Activated CD4-positive, alpha-beta T cell treated with anti-CD3 and anti-CD28 coated beads for 36 hours (primary cell): ENCODE measurements at regions of chr19 and their contacts with region 1.

Region 1: GRCh38 chr19:1490311-1491113 is at the start of gene PCSK4:
- DNase-seq: peak; percentile 99
- ATAC-seq: peak; percentile 92
- H3K4me3 Mint-ChIP-seq: peak within 1 kb of the TSS; percentile 72
- H3K27ac Mint-ChIP-seq: peak within 1 kb of the TSS; percentile 66
- H3K4me1 Mint-ChIP-seq: peaks cover 9% of the 10 kb centered on the region
- H3K27me3 Mint-ChIP-seq: peaks cover 3% of the 10 kb centered on the region
- total RNA-seq, gene PCSK4: 1.8 to 3.9 TPM

Region 2: DNA sequence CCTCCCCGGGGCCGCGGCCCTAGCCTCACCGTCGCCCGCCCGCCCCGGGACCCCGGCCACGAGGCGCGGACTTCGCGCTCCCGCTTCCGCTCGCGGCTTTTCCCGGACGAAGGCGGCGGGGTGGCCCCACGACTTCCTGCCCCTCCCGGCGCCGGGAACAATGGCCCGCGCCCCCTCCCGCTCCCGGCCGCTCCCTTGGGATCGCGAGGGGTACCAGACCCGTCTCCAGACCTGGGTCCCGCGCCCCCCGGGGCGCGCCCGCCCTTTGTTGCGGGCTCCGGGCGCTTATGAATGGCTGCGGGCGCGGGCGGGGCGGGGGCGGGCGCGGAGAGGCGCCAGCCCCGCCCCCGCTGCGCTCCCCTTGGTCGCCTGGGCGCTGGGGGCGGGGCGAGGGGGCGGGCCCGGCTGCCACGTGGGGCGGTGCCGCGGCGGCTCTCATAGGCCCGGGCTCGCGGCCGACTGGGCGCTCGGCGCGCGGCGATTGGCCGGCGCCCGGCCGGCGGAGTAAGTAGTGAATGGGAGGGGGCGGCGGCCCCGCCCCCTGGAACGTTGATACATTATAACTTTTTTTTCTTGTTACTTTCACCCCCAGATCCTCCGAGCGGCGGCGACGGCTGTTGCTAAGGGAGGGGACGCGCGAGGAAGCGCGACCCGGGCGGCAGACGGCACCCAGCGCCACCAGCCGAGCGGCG is 241.1 kb before region 1 on chr19:
- CTCF ChIA-PET with region 1: no interaction called
- POLR2A ChIA-PET with region 1: no interaction called
- intact Hi-C with region 1: loop called in 1 of 2 experiments (anchors 1 kb)
- DNase-seq: peak; percentile 97
- ATAC-seq: peak; percentile 53
- H3K4me3 Mint-ChIP-seq: peak overlapping the region; percentile 73
- H3K27ac Mint-ChIP-seq: no peak overlapping the region
- H3K4me1 Mint-ChIP-seq: peaks cover 9% of the 10 kb centered on the region
- H3K27me3 Mint-ChIP-seq: no peaks in the 10 kb centered on the region

Region 3: DNA sequence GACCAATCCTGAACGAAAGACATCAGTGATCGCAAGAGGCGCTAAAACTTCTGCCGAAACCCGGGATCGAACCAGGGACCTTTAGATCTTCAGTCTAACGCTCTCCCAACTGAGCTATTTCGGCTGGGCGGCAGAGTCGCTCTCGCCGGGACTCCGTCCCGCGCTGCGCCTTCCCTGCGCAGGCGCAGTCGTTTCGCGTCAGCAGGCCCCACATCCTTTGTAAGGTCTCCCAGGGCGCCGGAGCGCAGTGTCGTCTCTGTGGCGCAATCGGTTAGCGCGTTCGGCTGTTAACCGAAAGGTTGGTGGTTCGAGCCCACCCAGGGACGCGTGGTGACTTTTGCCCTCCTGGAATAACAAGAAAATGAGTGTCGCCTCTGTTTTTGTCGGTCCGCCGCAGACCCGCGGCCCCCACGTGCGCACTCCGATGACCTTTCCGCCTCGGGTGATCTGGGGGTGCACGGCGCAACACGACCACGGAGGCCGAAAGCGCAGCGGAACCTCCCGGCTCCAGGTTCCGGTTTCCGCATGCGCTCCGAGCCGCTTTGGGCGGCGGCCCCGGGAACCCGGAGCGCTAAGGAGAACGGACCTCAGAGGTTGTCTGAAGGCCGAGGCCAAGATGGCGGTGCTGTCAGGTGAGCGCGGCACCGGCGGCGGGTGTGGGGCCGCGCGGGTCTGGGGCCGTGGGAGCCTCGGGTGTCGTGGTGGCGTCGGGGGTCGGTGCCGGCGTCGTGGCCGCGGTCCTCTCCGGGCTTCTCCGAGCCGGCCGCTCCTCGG is 107.0 kb before region 1 on chr19 and contains the start of gene NDUFS7:
- CTCF ChIA-PET with region 1: no interaction called
- POLR2A ChIA-PET with region 1: interaction called, 3 read pairs
- intact Hi-C with region 1: loop called in 1 of 2 experiments (anchors 1 kb)
- DNase-seq: peak; percentile 94
- ATAC-seq: peak; percentile 88
- H3K4me3 Mint-ChIP-seq: peak within 1 kb of the TSS; percentile 81
- H3K27ac Mint-ChIP-seq: peak within 1 kb of the TSS; percentile 92
- H3K4me1 Mint-ChIP-seq: peaks cover 21% of the 10 kb centered on the region
- H3K27me3 Mint-ChIP-seq: peaks cover 2% of the 10 kb centered on the region
- total RNA-seq, gene NDUFS7: 93.4 to 113 TPM

Region 4: DNA sequence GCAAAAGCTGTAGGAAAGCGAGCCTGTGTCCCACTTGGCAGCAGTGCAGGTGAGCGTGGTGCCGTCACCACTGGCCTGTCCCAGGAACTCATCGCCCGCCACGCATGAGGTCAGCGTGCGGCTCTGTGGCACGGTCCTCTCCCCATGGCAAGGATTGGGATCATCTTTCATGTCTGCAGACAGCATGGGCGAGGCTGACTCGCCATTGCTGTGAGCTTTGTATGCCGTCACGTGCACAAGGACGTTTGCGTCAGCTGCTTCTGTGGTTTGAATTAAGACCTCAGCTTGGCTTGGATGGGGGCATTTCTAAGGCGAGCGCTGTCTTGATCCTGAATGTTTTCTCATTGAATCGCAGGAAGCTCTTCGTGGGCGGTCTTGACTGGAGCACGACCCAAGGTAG is 73.4 kb before region 1 on chr19:
- CTCF ChIA-PET with region 1: no interaction called
- POLR2A ChIA-PET with region 1: no interaction called
- intact Hi-C with region 1: no loop called
- DNase-seq: no peak
- ATAC-seq: no peak
- H3K4me3 Mint-ChIP-seq: no peak overlapping the region
- H3K27ac Mint-ChIP-seq: no peak overlapping the region
- H3K4me1 Mint-ChIP-seq: peaks cover 44% of the 10 kb centered on the region
- H3K27me3 Mint-ChIP-seq: no peaks in the 10 kb centered on the region

Region 5: DNA sequence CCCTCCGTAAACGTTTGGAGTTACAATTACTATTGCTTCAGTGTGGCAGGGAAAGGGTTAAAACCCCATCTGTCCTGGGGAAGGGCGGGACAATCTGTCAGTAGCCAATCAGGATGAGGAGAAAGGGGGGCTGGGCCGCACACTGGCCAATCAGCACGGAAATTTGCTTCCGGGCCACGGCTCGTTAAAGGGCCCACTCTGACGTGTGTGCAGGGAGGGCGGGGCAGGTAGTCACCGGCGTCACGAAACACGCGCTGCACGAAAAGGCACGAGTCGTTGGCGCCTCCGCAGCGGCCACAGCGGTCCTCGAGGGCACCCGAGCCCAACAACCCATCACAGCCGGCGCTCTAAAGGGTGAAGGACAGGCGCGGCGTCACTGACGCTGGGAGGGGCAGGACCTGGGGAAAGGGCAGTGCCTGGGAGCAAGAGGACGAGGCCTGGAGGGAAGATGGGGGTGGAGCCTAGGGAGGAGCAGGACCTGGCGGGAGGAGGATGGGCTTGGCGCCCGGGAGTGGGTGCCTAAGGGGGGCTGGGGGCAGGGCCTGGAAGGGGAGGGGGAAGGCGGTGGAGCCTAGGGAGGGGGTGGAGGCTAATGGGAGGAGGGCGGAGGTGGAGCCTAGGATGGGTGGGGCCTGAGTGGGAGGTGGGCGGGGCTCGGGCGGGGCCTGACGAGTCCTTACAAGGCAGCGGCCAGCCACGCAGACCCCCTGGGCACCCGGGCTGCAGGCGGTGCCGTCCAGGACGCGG is 17.4 kb after region 1 on chr19:
- CTCF ChIA-PET with region 1: interaction called, 4 read pairs
- POLR2A ChIA-PET with region 1: no interaction called
- intact Hi-C with region 1: loop called (anchors 1 kb)
- DNase-seq: peak; percentile 95
- ATAC-seq: peak; percentile 87
- H3K4me3 Mint-ChIP-seq: peak overlapping the region; percentile 73
- H3K27ac Mint-ChIP-seq: peak overlapping the region; percentile 88
- H3K4me1 Mint-ChIP-seq: peaks cover 16% of the 10 kb centered on the region
- H3K27me3 Mint-ChIP-seq: no peaks in the 10 kb centered on the region

Region 6: GRCh38 chr19:1605236-1606137 is 115.0 kb after region 1 on chr19 and contains the start of gene UQCR11:
- CTCF ChIA-PET with region 1: no interaction called
- POLR2A ChIA-PET with region 1: interaction called, 8 read pairs
- intact Hi-C with region 1: loop called in 1 of 2 experiments (anchors 1 kb)
- DNase-seq: peak; percentile 96
- ATAC-seq: peak; percentile 89
- H3K4me3 Mint-ChIP-seq: peak within 1 kb of the TSS; percentile 97
- H3K27ac Mint-ChIP-seq: peak within 1 kb of the TSS; percentile 99
- H3K4me1 Mint-ChIP-seq: peaks cover 52% of the 10 kb centered on the region
- H3K27me3 Mint-ChIP-seq: no peaks in the 10 kb centered on the region
- total RNA-seq, gene UQCR11: 152 to 226 TPM

Region 7: GRCh38 chr19:1863726-1864480 is 373.4 kb after region 1 on chr19:
- CTCF ChIA-PET with region 1: no interaction called
- POLR2A ChIA-PET with region 1: no interaction called
- intact Hi-C with region 1: loop called in 1 of 2 experiments (anchors 1 kb)
- DNase-seq: peak; percentile 97
- ATAC-seq: peak; percentile 75
- H3K4me3 Mint-ChIP-seq: peak overlapping the region; percentile 68
- H3K27ac Mint-ChIP-seq: peak overlapping the region; percentile 72
- H3K4me1 Mint-ChIP-seq: peaks cover 37% of the 10 kb centered on the region
- H3K27me3 Mint-ChIP-seq: no peaks in the 10 kb centered on the region